Adrenal gland (tissue), 19 donors: ENCODE measurements at regions of chr17 and their contacts with region 1.

Region 1: GRCh38 chr17:18033442-18034099 is 5.4 kb downstream of the ATPAF2 start:
- DNase-seq: peak; percentile 49 to 82 (median 67)
- H3K4me3 ChIP-seq: no peak overlapping the region
- H3K27ac ChIP-seq: no peak overlapping the region
- H3K4me1 ChIP-seq: peaks cover 7 to 15% of the 10 kb centered on the region in 2 donors
- H3K27me3 ChIP-seq: no peaks in the 10 kb centered on the region
- CTCF ChIP-seq: peak; percentile 28 to 80 (median 69)
- POLR2A ChIP-seq: no peak

Region 2: GRCh38 chr17:17819561-17819995 is 214.0 kb before region 1 on chr17:
- intact Hi-C with region 1: loop called in 1 of 2 experiments (anchors 5 kb)
- DNase-seq: peak; percentile 90 to 98 (median 96)
- H3K4me3 ChIP-seq: peak overlapping the region in 1 of 4 donors; percentile 78
- H3K27ac ChIP-seq: peak overlapping the region; percentile 1 to 96 (median 93)
- H3K4me1 ChIP-seq: peaks cover 59 to 79% of the 10 kb centered on the region in 2 donors
- H3K27me3 ChIP-seq: no peaks in the 10 kb centered on the region
- CTCF ChIP-seq: no peak
- POLR2A ChIP-seq: peak in 1 of 2 donors; percentile 73